Adrenal gland (tissue), 19 donors: ENCODE measurements at regions of chr3 and their contacts with region 1.

Region 1: GRCh38 chr3:126134219-126134975 is 46.0 kb downstream of the ALDH1L1 start:
- DNase-seq: peak; percentile 65 to 86 (median 69)
- H3K4me3 ChIP-seq: no peak overlapping the region
- H3K27ac ChIP-seq: no peak overlapping the region
- H3K4me1 ChIP-seq: peaks cover 0 to 7% of the 10 kb centered on the region in 2 donors
- H3K27me3 ChIP-seq: no peaks in the 10 kb centered on the region
- CTCF ChIP-seq: peak; percentile 60 to 90 (median 82)
- POLR2A ChIP-seq: no peak

Region 2: DNA sequence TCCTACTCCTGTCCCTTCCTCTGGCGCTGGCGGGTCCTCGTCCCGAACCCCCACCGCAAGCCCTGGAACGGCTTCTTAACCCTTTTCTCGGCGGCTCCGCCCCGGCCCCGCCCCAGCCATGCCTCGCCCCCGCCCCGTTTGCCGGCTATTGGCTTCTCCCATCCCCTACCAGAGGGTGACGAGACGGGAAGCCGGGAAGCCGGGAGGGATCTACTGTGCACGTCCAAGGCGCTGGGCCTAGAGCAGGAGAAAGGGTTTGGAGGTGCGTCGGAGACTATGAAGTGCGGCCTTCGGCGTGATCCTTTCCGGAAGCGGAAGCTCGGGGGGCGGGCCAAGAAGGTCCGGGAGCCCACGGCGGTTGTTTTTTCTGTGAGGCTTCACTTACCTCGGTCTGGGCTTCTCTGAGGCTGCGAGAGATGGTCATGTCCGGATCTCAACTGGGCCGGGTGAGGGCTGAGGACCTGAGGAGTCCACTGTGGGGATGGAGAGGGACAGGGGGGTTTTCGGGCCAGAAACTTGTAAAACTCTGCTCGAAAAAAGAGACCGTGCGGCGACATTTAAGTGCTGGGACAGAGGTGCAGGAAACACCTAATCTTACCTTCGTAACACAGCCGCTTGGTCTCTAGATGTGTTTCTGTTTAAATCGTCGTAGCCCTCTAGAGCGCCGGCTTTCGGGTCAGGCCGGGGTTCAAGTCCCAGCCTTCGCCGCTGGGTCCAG is 144.0 kb before region 1 on chr3:
- intact Hi-C with region 1: no loop called
- DNase-seq: peak; percentile 72 to 96 (median 94)
- H3K4me3 ChIP-seq: peak overlapping the region in 3 of 4 donors; percentile 45 to 73 (median 57)
- H3K27ac ChIP-seq: peak overlapping the region in 4 of 5 donors; percentile 52 to 85 (median 79)
- H3K4me1 ChIP-seq: peaks cover 0 to 16% of the 10 kb centered on the region in 2 donors
- H3K27me3 ChIP-seq: no peaks in the 10 kb centered on the region
- CTCF ChIP-seq: no peak
- POLR2A ChIP-seq: peak; percentile 36 to 77

Region 3: DNA sequence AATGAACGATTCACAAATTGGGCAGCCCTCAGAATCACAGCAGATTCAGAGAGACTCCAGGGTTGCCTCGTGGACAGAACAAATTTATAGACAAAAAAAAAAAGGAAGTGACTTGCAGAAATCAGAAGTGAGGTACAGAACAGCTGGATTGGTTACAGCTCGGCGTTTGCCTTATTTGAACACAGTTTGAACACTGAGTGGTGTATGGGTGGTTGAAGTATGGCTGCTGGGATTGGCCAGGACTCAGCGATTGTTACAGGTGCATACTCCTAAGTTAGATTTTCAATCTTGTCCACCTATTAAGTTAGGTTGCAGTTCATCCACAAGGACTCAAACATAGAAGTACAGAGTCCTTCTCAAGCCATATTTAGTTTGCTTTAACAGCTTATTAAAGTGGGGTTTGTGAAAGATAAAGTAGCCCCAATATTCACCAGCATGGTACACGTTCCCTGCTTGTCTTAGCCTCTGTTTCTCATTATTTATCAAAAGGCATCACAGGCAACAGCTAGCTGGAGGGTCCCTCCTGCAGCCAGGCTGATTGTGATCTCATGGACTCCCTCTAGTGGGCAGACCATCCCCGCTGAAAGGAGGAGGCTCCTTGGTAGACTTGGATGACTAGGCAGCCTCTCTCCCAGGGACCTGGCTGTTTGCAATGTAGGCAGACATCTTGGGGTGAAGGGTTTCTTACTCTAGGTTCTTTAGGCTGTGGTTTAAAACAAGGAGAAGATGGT is 63.6 kb after region 1 on chr3:
- intact Hi-C with region 1: loop called in 1 of 2 experiments (anchors 5 kb)
- DNase-seq: peak; percentile 71 to 90 (median 84)
- H3K4me3 ChIP-seq: no peak overlapping the region
- H3K27ac ChIP-seq: no peak overlapping the region
- H3K4me1 ChIP-seq: no peaks in the 10 kb centered on the region
- H3K27me3 ChIP-seq: no peaks in the 10 kb centered on the region
- CTCF ChIP-seq: peak; percentile 68 to 78 (median 71)
- POLR2A ChIP-seq: no peak

Region 4: DNA sequence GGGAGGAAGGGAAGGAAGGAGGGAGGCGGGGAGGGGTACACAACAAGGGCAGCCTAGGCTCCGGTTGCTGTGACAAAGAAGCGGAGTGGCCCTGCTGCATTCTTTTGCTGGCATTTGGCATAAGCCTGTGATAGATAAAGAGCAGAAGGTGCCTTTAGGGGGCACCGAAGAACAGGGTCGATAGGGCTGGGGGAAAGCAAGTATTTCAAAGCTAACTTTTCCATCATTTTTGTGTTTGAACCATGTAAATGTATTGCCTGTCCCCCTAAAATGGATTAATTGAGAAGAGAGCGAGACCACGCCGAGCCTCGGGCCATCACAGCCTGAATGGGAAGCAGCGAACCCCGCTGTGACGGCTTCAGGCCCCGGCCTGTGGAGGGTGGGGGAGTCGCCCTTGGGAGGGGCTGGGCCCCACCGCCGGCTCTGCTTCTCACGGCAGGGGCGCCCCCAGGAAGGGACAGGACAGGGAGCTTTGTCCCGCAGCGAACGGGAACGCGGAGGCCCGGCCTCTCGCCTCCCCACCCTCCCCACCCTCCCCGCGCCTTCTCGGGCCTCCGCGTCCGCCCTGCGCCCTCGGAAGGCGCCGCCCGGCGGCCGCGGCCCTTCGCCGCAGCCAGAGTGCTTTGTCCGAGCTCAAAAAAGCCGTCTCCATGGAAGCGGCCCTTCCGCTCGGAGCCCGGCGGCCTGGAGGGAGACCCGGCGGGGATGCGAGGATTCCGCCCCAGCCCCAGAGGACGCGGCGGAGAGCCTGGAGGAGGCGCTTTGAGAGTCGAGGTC is 78.4 kb after region 1 on chr3:
- intact Hi-C with region 1: loop called (anchors 5 kb)
- DNase-seq: peak; percentile 41 to 58 (median 54)
- H3K4me3 ChIP-seq: peak overlapping the region in 2 of 4 donors; percentile 26 to 59
- H3K27ac ChIP-seq: peak overlapping the region in 3 of 5 donors; percentile 61 to 83 (median 74)
- H3K4me1 ChIP-seq: peaks cover 11 to 18% of the 10 kb centered on the region in 2 donors
- H3K27me3 ChIP-seq: no peaks in the 10 kb centered on the region
- CTCF ChIP-seq: peak; percentile 15 to 51 (median 32)
- POLR2A ChIP-seq: peak in 1 of 2 donors; percentile 24

Region 5: GRCh38 chr3:126365351-126366277 is 231.2 kb after region 1 on chr3:
- intact Hi-C with region 1: loop called in 1 of 2 experiments (anchors 10 kb)
- DNase-seq: peak in 1 of 7 donors; percentile 7
- H3K4me3 ChIP-seq: no peak overlapping the region
- H3K27ac ChIP-seq: no peak overlapping the region
- H3K4me1 ChIP-seq: no peaks in the 10 kb centered on the region
- H3K27me3 ChIP-seq: no peaks in the 10 kb centered on the region
- CTCF ChIP-seq: no peak
- POLR2A ChIP-seq: no peak

Region 6: DNA sequence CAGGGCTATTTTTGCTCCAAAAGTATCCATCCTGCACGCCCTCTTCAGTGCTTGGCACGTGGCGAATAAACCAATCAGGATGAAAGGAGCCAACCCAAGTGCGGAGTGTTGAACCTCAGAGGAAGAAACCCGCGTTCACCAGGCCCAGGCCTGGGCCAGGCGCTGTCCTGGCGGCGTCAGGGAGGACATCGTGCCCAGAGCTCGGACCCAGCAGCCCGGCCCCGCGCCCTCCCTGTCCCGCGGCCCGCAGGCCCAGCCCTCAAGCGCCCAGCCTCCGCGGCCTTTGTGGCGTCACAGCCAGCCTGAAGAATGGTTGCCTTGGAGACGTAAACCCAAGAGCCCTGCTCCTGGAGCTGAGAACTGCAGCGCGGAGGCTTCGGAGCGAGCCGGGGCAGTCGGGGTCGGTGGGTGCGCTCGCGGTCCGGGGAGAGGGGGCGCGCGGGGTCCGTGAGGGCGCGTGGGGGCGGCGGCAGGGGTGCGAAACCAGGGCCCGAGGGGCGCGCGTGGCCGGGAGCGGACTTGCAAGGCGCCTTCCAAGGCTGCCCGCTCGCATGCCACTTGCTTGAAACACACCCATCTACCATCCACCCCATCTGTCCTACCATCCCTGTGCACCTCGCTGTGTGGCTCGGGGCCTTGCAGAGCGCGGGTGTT is 260.3 kb after region 1 on chr3 and contains the start of gene CFAP100:
- intact Hi-C with region 1: loop called in 1 of 2 experiments (anchors 5 kb)
- DNase-seq: peak in 6 of 7 donors; percentile 38 to 74 (median 46)
- H3K4me3 ChIP-seq: no peak within 1 kb of the TSS
- H3K27ac ChIP-seq: no peak within 1 kb of the TSS
- H3K4me1 ChIP-seq: peaks cover 0 to 4% of the 10 kb centered on the region in 2 donors
- H3K27me3 ChIP-seq: peaks cover 7% of the 10 kb centered on the region
- CTCF ChIP-seq: no peak
- POLR2A ChIP-seq: no peak
- total RNA-seq, gene CFAP100: 0.17 TPM in 1 of 9 donors, not detected in the others